Dorsolateral prefrontal cortex (tissue), 120 donors: ENCODE measurements at regions of chr1 and their contacts with region 1.

Region 1: GRCh38 chr1:111481387-111482221 is 7.8 kb downstream of the C1orf162 start:
- DNase-seq: peak; percentile 43 to 87 (median 80)
- H3K4me3 ChIP-seq: no peak overlapping the region
- H3K27ac ChIP-seq: peak overlapping the region in 33 of 59 donors; percentile 6 to 80 (median 42)
- H3K27me3 ChIP-seq: no peaks in the 10 kb centered on the region
- CTCF ChIP-seq: peak in 55 of 56 donors; percentile 18 to 88 (median 74)

Region 2: DNA sequence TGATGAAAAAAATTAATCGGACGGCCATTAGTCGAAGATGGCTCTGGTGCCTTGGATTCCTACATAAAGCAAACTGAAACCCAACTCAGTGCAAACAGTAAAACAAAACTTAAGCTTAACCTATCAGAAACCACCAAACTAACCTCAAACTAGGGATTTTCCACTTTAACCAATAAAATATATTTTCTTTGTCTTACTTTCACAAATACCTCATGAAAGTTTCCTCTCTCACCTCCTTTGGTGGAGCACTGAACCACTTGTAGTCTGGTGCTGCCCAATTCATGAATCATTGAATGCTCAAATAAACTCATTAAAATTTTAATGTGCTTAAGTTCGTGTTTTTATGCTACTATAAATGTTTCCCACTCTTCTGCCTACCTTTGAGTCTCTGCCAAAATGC is 14.8 kb after region 1 on chr1:
- intact Hi-C with region 1: no loop called
- DNase-seq: no peak
- H3K4me3 ChIP-seq: no peak overlapping the region
- H3K27ac ChIP-seq: peak overlapping the region in 11 of 59 donors; percentile 4 to 90 (median 24)
- H3K27me3 ChIP-seq: peaks cover 0 to 6% (median 0%) of the 10 kb centered on the region in 45 donors
- CTCF ChIP-seq: no peak

Region 3: GRCh38 chr1:111709986-111710385 is 228.4 kb after region 1 on chr1:
- intact Hi-C with region 1: loop called in 1 of 2 experiments (anchors 5 kb)
- DNase-seq: no peak
- H3K4me3 ChIP-seq: no peak overlapping the region
- H3K27ac ChIP-seq: no peak overlapping the region
- H3K27me3 ChIP-seq: no peaks in the 10 kb centered on the region
- CTCF ChIP-seq: no peak

Region 4: DNA sequence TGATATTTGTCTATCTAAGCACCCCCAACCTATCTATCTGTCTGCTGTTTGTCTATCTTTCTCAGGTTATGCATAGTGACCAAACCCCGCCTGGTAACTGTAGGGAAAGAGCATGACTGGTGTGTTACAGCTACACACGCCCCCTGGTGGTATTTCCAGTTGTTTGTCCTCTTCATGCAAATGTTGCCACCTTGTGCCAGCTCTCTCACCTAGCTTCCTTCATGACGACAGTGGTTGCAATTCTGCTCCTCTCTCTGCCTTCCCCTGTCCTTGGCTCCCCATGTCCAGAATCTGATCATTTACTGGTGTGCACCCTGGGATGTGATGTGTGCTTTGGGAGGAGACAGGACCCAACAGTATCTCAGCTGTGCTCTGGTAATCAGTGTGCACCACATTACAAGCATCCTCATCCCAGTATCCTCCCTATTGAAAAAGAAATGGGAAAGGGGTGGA is 265.7 kb after region 1 on chr1:
- intact Hi-C with region 1: no loop called
- DNase-seq: no peak
- H3K4me3 ChIP-seq: no peak overlapping the region
- H3K27ac ChIP-seq: peak overlapping the region in 21 of 59 donors; percentile 1 to 72 (median 37)
- H3K27me3 ChIP-seq: no peaks in the 10 kb centered on the region
- CTCF ChIP-seq: peak in 54 of 56 donors; percentile 9 to 63 (median 44)